Endothelial cell of umbilical vein (primary cell): ENCODE measurements at regions of chr2 and their contacts with region 1.

Region 1: GRCh38 chr2:146415291-146415690 is 1429.5 kb upstream of the ACVR2A start:
- DNase-seq: no peak
- H3K4me3 ChIP-seq: no peak overlapping the region
- H3K27ac ChIP-seq: no peak overlapping the region
- H3K4me1 ChIP-seq: no peaks in the 10 kb centered on the region
- H3K27me3 ChIP-seq: no peaks in the 10 kb centered on the region
- CTCF ChIP-seq: no peak
- POLR2A ChIP-seq: no peak

Region 2: GRCh38 chr2:146251328-146251727 is 164.0 kb before region 1 on chr2:
- CTCF ChIA-PET with region 1: no interaction called
- POLR2A ChIA-PET with region 1: no interaction called
- dilution Hi-C with region 1: no loop called
- intact Hi-C with region 1: no loop called
- DNase-seq: no peak
- H3K4me3 ChIP-seq: no peak overlapping the region
- H3K27ac ChIP-seq: no peak overlapping the region
- H3K4me1 ChIP-seq: no peaks in the 10 kb centered on the region
- H3K27me3 ChIP-seq: no peaks in the 10 kb centered on the region
- CTCF ChIP-seq: no peak
- POLR2A ChIP-seq: no peak

Region 3: DNA sequence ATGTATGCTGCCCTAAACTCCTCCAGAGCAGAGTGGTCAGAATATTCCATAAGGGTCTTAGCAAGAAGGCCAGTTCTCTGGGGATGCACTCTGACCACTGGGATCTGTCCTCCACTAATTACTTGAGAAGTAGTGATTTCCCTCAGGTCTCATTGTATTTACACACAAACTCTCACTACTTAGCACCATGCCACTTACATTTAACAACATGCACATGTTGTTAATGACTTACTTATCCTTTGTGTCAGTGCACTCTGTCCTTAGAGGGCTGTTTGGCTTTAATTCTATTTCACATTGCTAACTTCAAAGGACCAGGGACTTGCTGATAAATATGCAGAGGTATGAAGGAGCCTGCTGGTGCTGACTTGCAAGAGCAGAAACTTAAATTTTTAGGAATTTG is 14.1 kb after region 1 on chr2:
- CTCF ChIA-PET with region 1: interaction called, 10 read pairs
- POLR2A ChIA-PET with region 1: no interaction called
- dilution Hi-C with region 1: no loop called
- intact Hi-C with region 1: no loop called
- DNase-seq: no peak
- H3K4me3 ChIP-seq: no peak overlapping the region
- H3K27ac ChIP-seq: no peak overlapping the region
- H3K4me1 ChIP-seq: no peaks in the 10 kb centered on the region
- H3K27me3 ChIP-seq: no peaks in the 10 kb centered on the region
- CTCF ChIP-seq: no peak
- POLR2A ChIP-seq: no peak

Region 4: GRCh38 chr2:146532509-146533147 is 117.3 kb after region 1 on chr2:
- CTCF ChIA-PET with region 1: no interaction called
- POLR2A ChIA-PET with region 1: no interaction called
- dilution Hi-C with region 1: no loop called
- intact Hi-C with region 1: no loop called
- DNase-seq: no peak
- H3K4me3 ChIP-seq: no peak overlapping the region
- H3K27ac ChIP-seq: no peak overlapping the region
- H3K4me1 ChIP-seq: no peaks in the 10 kb centered on the region
- H3K27me3 ChIP-seq: no peaks in the 10 kb centered on the region
- CTCF ChIP-seq: no peak
- POLR2A ChIP-seq: no peak

Region 5: GRCh38 chr2:147231607-147232006 is 816.3 kb after region 1 on chr2:
- CTCF ChIA-PET with region 1: no interaction called
- POLR2A ChIA-PET with region 1: no interaction called
- dilution Hi-C with region 1: no loop called
- intact Hi-C with region 1: no loop called
- DNase-seq: no peak
- H3K4me3 ChIP-seq: no peak overlapping the region
- H3K27ac ChIP-seq: no peak overlapping the region
- H3K4me1 ChIP-seq: no peaks in the 10 kb centered on the region
- H3K27me3 ChIP-seq: no peaks in the 10 kb centered on the region
- CTCF ChIP-seq: no peak
- POLR2A ChIP-seq: no peak